PC-3 (cell line): ENCODE measurements at regions of chr3 and their contacts with region 1.

Region 1: GRCh38 chr3:4786431-4786830 is 192.8 kb upstream of the BHLHE40 start:
- DNase-seq: no peak
- ATAC-seq: no peak
- H3K4me3 ChIP-seq: no peak overlapping the region
- H3K27ac ChIP-seq: no peak overlapping the region
- H3K4me1 ChIP-seq: no peaks in the 10 kb centered on the region
- H3K27me3 ChIP-seq: no peaks in the 10 kb centered on the region
- CTCF ChIP-seq: no peak

Region 2: GRCh38 chr3:4712143-4712542 is 74.3 kb before region 1 on chr3:
- CTCF ChIA-PET with region 1: interaction called, 11 read pairs
- POLR2A ChIA-PET with region 1: no interaction called
- intact Hi-C with region 1: no loop called
- DNase-seq: peak; percentile 55
- ATAC-seq: no peak
- H3K4me3 ChIP-seq: no peak overlapping the region
- H3K27ac ChIP-seq: peak overlapping the region; percentile 18; the same call in 1 of the 2 replicates
- H3K4me1 ChIP-seq: peaks cover 28% of the 10 kb centered on the region
- H3K27me3 ChIP-seq: no peaks in the 10 kb centered on the region
- CTCF ChIP-seq: no peak

Region 3: DNA sequence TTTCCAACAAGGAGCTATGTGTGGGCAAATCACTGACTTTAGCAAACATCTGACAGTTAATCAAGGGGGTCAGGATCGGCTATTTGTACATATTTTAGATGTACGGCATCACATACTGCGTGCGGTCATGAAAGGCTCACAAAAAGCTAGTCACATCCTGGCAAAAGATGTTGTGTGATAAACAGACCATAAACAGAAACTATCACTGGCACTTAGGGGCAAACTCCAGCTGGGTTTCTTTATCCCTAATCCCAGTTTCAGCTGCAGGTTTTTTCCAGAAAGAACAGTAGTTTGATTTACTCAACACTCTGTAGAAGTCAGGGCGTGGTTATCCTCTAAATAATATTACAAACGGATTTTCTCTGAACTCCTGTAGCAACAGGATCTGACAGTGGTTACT is 80.4 kb after region 1 on chr3:
- CTCF ChIA-PET with region 1: no interaction called
- POLR2A ChIA-PET with region 1: no interaction called
- intact Hi-C with region 1: no loop called
- DNase-seq: peak; percentile 29
- ATAC-seq: peak; percentile 37
- H3K4me3 ChIP-seq: peak overlapping the region; percentile 32; the same call in 1 of the 2 replicates
- H3K27ac ChIP-seq: peak overlapping the region; percentile 75
- H3K4me1 ChIP-seq: peaks cover 16% of the 10 kb centered on the region
- H3K27me3 ChIP-seq: no peaks in the 10 kb centered on the region
- CTCF ChIP-seq: no peak